ENCODE measurements at regions of chr2 and their contacts with region 1.

Region 1: GRCh38 chr2:41111836-41112627 is 660.1 kb upstream of the SLC8A1 start:
- DNase-seq: no peak
- H3K4me3 ChIP-seq: no peak overlapping the region
- H3K27ac ChIP-seq: no peak overlapping the region
- H3K4me1 ChIP-seq: no peaks in the 10 kb centered on the region
- H3K27me3 ChIP-seq: no peaks in the 10 kb centered on the region
- CTCF ChIP-seq: no peak
- POLR2A ChIP-seq: no peak

Region 2: DNA sequence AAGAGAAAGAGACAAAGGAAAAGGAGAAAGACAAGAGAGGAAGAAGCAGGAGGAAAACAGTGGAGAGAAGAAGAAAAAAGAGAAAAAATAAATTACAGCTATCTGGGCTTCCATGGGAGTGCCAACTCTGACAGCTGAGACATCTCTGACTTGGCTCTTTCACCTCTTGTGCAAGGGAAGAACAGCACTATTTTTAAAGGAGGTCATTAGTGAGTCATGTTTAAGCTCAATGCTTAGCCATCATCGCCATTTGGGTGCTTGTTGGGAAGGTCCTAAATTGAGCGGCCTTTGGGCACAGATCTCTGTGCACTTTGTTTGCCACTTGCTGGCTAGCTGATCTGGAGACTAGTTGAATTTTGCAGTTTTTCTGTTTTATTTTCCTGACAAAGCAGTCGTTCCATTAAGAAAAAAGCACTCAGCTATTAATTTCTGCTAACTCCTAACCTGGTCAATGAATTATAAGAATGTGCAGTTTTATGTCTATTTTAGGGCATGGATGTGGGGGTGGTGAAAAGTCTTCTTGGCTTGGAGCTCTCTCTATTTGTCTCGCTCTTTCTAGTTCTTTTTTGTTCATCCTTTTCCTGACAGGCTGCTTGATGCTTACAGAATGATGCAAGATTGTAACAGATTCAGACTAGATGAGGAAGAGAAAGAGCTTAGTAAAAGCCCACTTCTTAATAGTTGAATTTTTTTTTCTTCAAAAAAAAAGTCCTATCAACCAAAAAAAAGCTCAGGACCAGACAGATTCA is 891.7 kb before region 1 on chr2:
- intact Hi-C with region 1: loop called (anchors 10 kb)
- DNase-seq: no peak
- H3K4me3 ChIP-seq: no peak overlapping the region
- H3K27ac ChIP-seq: no peak overlapping the region
- H3K4me1 ChIP-seq: no peaks in the 10 kb centered on the region
- H3K27me3 ChIP-seq: no peaks in the 10 kb centered on the region
- CTCF ChIP-seq: no peak
- POLR2A ChIP-seq: no peak

Region 3: GRCh38 chr2:40516604-40517003 is 595.4 kb before region 1 on chr2:
- intact Hi-C with region 1: no loop called
- DNase-seq: no peak
- H3K4me3 ChIP-seq: no peak overlapping the region
- H3K27ac ChIP-seq: no peak overlapping the region
- H3K4me1 ChIP-seq: no peaks in the 10 kb centered on the region
- H3K27me3 ChIP-seq: no peaks in the 10 kb centered on the region
- CTCF ChIP-seq: no peak
- POLR2A ChIP-seq: no peak

Measured in breast epithelium (tissue), 4 donors.